ENCODE measurements at regions of chr17 and their contacts with region 1.

Region 1: DNA sequence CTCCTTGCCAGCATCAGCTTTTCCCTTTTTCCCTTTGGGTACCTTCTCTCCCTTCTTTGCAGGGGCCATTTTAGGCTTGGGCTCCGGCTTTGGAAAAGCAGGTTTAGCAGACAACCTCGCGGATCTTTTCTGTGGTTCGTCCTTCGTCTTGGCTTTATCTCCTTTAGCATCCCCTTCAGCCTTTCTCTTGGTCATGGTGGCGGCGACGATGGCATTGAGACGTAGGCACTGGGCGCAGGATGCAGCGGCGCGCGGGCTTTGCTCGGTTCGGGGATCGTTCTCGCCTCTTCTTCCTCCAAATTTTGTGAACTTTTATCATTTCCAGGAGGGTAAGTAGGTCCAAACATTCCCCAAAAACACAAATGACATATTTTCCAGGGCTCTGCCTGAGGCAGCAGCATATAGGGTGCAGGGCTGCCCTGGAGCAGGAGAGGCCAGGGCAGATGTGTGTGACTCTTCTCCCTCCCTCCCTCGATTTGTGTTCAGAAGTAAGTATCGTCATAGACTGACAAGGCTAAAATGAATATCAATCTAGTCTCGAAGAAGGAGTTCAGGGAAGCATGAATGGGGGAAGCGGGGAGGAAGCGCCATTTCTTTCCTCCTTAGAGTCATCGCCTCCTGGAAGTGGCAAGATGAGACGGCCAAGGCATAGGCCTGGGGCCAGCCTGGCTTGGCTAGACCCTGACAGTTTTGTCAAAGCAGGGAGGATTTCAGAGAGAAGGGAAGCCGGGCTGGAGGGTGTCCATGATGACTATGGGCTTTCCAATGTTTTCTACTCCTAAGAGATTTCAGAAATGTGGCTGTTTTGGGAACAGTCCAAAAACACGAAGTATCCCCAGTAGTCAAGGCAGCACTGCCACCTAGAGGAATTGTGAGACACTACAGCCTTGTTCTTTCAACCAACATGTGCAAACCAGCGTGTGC is 13.2 kb downstream of the CHCT1 start:
- DNase-seq: peak; percentile 70
- ATAC-seq: peak; percentile 93

Region 2: DNA sequence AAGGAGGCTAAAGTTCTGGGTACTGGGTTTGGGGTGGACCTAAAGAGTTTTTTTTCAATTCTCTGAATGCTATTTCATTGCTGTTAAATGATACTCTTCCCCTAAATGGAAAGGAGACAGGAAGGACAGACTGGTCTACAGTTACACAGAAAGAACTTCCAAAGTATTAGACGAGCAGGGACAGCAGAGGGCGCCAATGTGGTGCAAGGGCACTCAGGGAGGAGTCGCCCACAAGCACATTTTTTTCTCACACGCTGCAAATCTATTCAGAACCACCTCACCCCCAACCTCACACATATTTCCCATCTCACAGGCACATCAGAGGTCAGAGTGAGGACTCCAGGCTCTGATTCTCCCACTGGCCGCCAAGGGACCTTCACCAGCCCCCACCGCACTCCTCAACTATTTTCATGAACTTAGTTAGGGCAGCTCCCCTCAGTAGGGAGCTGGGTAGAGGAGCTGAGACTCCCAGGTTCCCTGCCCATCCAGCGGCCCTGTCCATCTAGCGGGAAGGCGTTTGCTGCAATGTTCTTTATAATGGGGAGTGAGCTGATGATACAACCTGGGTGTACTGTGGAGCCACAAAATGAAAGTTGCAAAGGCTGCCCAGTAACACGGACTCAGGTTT is 292.5 kb before region 1 on chr17:
- intact Hi-C with region 1: loop called (anchors 10 kb)
- DNase-seq: peak; percentile 89
- ATAC-seq: peak; percentile 79

Region 3: DNA sequence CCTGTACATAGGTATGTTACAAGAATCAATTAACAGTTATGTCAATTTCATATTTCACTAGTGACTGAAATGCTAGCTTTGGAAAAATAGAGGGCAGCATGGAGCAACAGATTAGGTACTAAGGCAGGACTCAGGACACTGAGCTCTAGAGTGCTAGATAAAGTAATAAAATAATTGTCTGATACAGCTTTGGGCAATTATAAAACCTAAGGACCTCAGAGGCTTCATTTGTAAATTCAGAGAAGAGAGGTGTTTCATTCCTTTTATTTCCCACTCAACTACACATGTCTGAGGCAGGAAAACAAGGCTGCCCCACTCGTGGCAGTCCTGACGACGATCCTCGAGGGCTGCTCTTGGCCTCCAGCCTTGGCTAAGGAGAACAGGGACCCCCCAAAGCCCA is 204.3 kb before region 1 on chr17:
- intact Hi-C with region 1: loop called (anchors 10 kb)
- DNase-seq: no peak
- ATAC-seq: no peak

Measured in Right ventricle myocardium superior (tissue), 1 donor.